Caco-2 (cell line): ENCODE measurements at regions of chr3 and their contacts with region 1.

Region 1: GRCh38 chr3:144294659-144295538 is 323.3 kb downstream of the DIPK2A start:
- DNase-seq: no peak
- H3K4me3 ChIP-seq: no peak overlapping the region
- H3K4me3 Mint-ChIP-seq: peak overlapping the region; percentile 50
- H3K27ac Mint-ChIP-seq: peak overlapping the region; percentile 68
- H3K4me1 ChIP-seq: peaks cover 38% of the 10 kb centered on the region
- H3K4me1 Mint-ChIP-seq: peaks cover 21% of the 10 kb centered on the region
- H3K27me3 ChIP-seq: no peaks in the 10 kb centered on the region
- H3K27me3 Mint-ChIP-seq: no peaks in the 10 kb centered on the region
- CTCF ChIP-seq: no peak

Region 2: GRCh38 chr3:144175644-144176425 is 119.1 kb before region 1 on chr3:
- CTCF ChIA-PET with region 1: no interaction called
- POLR2A ChIA-PET with region 1: no interaction called
- intact Hi-C with region 1: no loop called
- DNase-seq: no peak
- H3K4me3 ChIP-seq: no peak overlapping the region
- H3K4me3 Mint-ChIP-seq: no peak overlapping the region
- H3K27ac Mint-ChIP-seq: peak overlapping the region; percentile 64
- H3K4me1 ChIP-seq: no peaks in the 10 kb centered on the region
- H3K4me1 Mint-ChIP-seq: no peaks in the 10 kb centered on the region
- H3K27me3 ChIP-seq: no peaks in the 10 kb centered on the region
- H3K27me3 Mint-ChIP-seq: no peaks in the 10 kb centered on the region
- CTCF ChIP-seq: no peak

Region 3: DNA sequence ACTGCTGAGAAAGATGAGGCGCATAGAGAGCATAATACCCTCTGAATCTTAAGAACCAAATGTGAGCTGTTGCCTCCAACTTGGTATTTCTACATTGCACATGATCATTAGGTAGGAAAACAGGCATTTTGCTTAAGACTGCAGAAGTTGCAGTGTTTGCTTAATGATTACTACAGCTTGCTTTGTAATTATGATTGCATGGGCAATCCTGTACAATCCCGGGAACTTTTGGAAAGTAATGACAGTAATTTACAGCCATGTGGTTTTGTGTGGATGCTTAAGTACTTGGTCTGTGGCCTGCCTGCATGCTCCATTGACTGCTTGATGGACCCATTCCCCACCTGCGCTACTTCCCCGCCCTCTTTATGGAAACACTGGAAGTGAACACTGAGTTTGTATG is 22.2 kb before region 1 on chr3:
- CTCF ChIA-PET with region 1: no interaction called
- POLR2A ChIA-PET with region 1: no interaction called
- intact Hi-C with region 1: no loop called
- DNase-seq: no peak
- H3K4me3 ChIP-seq: no peak overlapping the region
- H3K4me3 Mint-ChIP-seq: no peak overlapping the region
- H3K27ac Mint-ChIP-seq: no peak overlapping the region
- H3K4me1 ChIP-seq: 0 out of 2 replicates have a peak, but pooled peaks cover 3% of the 10 kb centered on the region
- H3K4me1 Mint-ChIP-seq: no peaks in the 10 kb centered on the region
- H3K27me3 ChIP-seq: no peaks in the 10 kb centered on the region
- H3K27me3 Mint-ChIP-seq: no peaks in the 10 kb centered on the region
- CTCF ChIP-seq: no peak

Region 4: DNA sequence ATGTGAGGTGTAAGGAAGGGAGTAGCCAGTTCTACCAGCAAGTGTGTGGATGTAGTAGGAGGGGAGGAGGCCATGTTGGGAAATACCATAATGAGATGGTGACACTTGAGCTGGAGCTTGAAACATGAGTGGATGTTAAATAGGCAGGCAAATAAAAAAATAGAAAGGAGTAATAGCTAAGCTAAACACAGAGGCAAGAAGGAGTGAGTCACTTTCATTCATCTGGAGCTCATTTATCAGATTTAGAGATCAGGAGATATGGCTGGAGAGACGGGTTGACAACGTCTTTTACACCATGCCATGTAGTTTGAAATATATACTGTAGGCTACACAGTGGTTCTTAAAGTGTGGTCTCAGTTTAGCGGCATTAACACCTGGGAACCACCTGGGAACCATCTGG is 67.2 kb after region 1 on chr3:
- CTCF ChIA-PET with region 1: no interaction called
- POLR2A ChIA-PET with region 1: no interaction called
- intact Hi-C with region 1: loop called (anchors 5 kb)
- DNase-seq: no peak
- H3K4me3 ChIP-seq: no peak overlapping the region
- H3K4me3 Mint-ChIP-seq: no peak overlapping the region
- H3K27ac Mint-ChIP-seq: peak overlapping the region; percentile 54
- H3K4me1 ChIP-seq: peaks cover 74% of the 10 kb centered on the region
- H3K4me1 Mint-ChIP-seq: peaks cover 45% of the 10 kb centered on the region
- H3K27me3 ChIP-seq: no peaks in the 10 kb centered on the region
- H3K27me3 Mint-ChIP-seq: no peaks in the 10 kb centered on the region
- CTCF ChIP-seq: no peak

Region 5: GRCh38 chr3:144556392-144556791 is 261.5 kb after region 1 on chr3:
- CTCF ChIA-PET with region 1: no interaction called
- POLR2A ChIA-PET with region 1: no interaction called
- intact Hi-C with region 1: loop called (anchors 2 kb)
- DNase-seq: no peak
- H3K4me3 ChIP-seq: no peak overlapping the region
- H3K4me3 Mint-ChIP-seq: no peak overlapping the region
- H3K27ac Mint-ChIP-seq: no peak overlapping the region
- H3K4me1 ChIP-seq: peaks cover 26% of the 10 kb centered on the region
- H3K4me1 Mint-ChIP-seq: peaks cover 25% of the 10 kb centered on the region
- H3K27me3 ChIP-seq: no peaks in the 10 kb centered on the region
- H3K27me3 Mint-ChIP-seq: no peaks in the 10 kb centered on the region
- CTCF ChIP-seq: no peak

Region 6: GRCh38 chr3:144763878-144764454 is 469.1 kb after region 1 on chr3:
- CTCF ChIA-PET with region 1: no interaction called
- POLR2A ChIA-PET with region 1: no interaction called
- intact Hi-C with region 1: no loop called
- DNase-seq: no peak
- H3K4me3 ChIP-seq: no peak overlapping the region
- H3K4me3 Mint-ChIP-seq: peak overlapping the region; percentile 13
- H3K27ac Mint-ChIP-seq: no peak overlapping the region
- H3K4me1 ChIP-seq: no peaks in the 10 kb centered on the region
- H3K4me1 Mint-ChIP-seq: no peaks in the 10 kb centered on the region
- H3K27me3 ChIP-seq: no peaks in the 10 kb centered on the region
- H3K27me3 Mint-ChIP-seq: no peaks in the 10 kb centered on the region
- CTCF ChIP-seq: no peak